Cardiac septum (tissue), 1 donor: ENCODE measurements at regions of chr19 and their contacts with region 1.

Region 1: GRCh38 chr19:13051267-13052165 is 51.1 kb downstream of the LYL1 start:
- DNase-seq: no peak

Region 2: DNA sequence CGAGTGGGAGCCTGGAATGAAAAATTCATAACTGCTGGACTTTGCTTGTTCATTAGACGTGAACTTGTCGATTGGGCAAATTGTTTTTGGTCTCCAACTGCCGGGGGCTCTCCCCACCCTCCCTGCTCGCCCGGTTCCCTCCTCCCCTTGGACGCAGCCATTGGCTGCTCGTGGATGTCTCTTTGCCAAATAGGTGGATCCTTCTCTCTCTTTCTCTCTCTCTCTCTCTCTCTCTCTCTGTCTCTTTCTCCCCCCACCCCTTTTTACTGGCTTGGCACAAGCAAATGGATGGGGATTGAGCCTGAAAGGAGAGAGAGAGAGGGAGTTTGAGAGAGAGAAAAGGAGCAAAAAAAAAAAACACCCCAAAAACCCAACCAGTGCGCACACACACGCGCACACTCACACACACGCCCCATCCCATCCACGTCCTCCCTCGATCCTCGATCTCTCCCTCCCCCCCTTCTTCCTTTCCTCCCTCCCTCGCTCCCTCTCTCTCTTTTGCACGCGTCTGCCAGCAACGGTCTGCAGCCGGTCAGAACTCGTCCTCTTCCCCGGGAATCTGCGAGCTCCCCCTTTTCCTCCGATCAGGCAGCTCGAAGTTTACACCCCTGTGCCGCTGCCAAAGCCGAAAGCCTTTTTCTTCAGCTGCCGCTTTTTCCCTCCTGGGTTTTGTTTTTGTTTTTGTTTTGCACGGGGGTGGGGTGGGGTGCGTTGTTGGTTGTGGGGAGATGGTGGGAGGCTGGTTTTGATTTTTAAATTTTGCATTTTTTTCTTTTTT is 28.5 kb before region 1 on chr19:
- intact Hi-C with region 1: loop called (anchors 1 kb)
- DNase-seq: peak; percentile 89

Region 3: DNA sequence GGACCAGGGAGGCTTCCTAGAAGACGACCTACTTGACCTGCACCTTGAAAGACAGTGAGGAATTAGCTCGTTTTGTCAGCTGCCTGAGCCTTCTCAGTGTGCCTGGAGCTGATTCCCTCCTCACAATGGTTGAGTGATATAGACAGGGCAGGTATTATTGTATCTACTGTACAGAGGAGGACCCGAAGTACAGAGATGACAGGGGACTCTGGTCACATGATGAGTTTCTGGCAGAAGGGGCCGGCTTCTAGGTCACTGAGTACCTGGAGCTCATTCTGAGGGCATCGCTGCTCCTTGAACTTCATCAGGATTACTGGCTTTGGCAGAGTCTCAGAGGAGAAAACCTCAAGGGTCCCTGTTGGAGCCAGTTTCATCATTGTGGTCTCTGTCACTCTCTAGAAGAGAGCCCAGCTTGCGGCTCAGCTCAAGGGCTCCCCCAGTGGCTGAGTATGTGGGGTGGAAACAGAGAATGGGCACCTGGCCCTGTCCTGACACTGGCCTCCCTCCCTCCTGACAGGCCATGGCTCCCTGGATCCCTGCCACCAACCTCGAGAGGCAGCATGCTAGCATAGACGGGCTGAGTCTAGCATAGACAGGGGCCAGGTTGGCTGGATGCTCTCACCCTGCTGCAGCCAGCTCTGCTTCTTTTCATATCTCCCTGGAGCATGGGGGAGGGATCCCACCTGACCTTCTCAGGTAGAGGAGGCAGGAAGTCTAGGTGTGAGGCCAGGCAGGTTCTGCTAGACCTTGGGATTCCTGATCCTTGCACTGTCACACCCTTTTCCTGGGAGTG is 17.5 kb before region 1 on chr19:
- intact Hi-C with region 1: loop called (anchors 2 kb)
- DNase-seq: peak; percentile 90

Region 4: GRCh38 chr19:13846557-13847406 is 795.3 kb after region 1 on chr19:
- intact Hi-C with region 1: loop called (anchors 10 kb)
- DNase-seq: peak; percentile 96